IMR-90 (cell line): ENCODE measurements at regions of chr11 and their contacts with region 1.

Region 1: GRCh38 chr11:124970925-124971324 is 16.9 kb downstream of the CCDC15 start:
- DNase-seq: peak; percentile 35
- ATAC-seq: peak; percentile 69
- H3K4me3 ChIP-seq: no peak overlapping the region
- H3K27ac ChIP-seq: no peak overlapping the region
- H3K4me1 ChIP-seq: no peaks in the 10 kb centered on the region
- H3K27me3 ChIP-seq: no peaks in the 10 kb centered on the region
- CTCF ChIP-seq: no peak; the same call in 1 of the 2 replicates
- POLR2A ChIP-seq: no peak
- RAD21 ChIP-seq: peak; percentile 34; the same call in 1 of the 2 replicates

Region 2: GRCh38 chr11:124934862-124935547 is 35.9 kb before region 1 on chr11:
- CTCF ChIA-PET with region 1: no interaction called
- POLR2A ChIA-PET with region 1: no interaction called
- dilution Hi-C with region 1: no loop called
- in situ Hi-C with region 1: no loop called
- intact Hi-C with region 1: no loop called
- DNase-seq: peak; percentile 96
- ATAC-seq: peak; percentile 92
- H3K4me3 ChIP-seq: no peak overlapping the region
- H3K27ac ChIP-seq: peak overlapping the region; percentile 81
- H3K4me1 ChIP-seq: peaks cover 17% of the 10 kb centered on the region
- H3K27me3 ChIP-seq: no peaks in the 10 kb centered on the region
- CTCF ChIP-seq: peak; percentile 35
- POLR2A ChIP-seq: no peak
- RAD21 ChIP-seq: no peak

Region 3: DNA sequence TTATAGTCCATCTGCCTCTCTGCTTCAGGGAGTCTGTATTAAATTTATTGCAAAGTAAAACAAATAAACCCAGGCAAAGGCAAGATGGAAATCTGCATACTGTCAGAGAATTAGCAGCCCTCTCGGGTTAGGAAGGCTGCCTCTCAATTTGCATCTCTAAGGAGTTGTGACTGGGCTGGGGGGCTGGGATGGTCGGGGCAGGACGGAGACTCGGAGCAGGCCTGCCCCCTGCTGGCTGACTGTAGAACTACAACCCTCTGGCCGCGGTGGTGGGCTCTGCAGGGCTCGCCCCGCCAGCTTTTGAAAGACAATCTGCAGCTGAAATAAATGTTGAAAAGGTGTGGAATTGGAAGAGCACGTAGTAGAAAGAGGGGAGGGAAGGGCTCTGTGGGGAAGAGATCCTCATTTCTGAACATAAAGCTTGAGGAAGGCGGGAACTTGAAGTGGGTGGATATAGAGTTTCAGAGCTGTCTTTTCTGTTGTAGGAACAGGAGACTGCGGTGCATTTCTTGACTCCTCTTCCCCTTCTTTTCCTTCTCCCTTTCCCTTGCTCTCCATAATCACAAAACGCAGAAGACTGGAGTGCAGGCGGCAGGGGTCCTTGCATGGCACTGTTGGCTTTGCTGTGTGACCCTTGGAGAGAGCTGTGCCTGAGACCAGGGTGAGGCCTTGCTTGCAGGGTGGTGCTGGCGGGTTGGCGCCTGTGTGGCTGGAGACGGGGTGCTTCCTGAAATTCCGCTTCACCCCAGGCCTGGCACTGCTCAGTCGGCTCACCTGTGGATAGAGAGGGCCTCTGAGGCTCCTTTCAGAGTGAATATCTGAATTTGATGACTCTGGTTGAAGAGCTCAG is 171.0 kb after region 1 on chr11:
- CTCF ChIA-PET with region 1: no interaction called
- POLR2A ChIA-PET with region 1: no interaction called
- dilution Hi-C with region 1: no loop called
- in situ Hi-C with region 1: loop called (anchors 10 kb)
- intact Hi-C with region 1: loop called (anchors 2 kb)
- DNase-seq: peak; percentile 29
- ATAC-seq: peak; percentile 100
- H3K4me3 ChIP-seq: no peak overlapping the region
- H3K27ac ChIP-seq: no peak overlapping the region
- H3K4me1 ChIP-seq: no peaks in the 10 kb centered on the region; the same call in 1 of the 2 replicates
- H3K27me3 ChIP-seq: peaks cover 13% of the 10 kb centered on the region
- CTCF ChIP-seq: peak; percentile 83
- POLR2A ChIP-seq: 0 out of 2 replicates have a peak, but pooled peaks have one; percentile 29
- RAD21 ChIP-seq: peak; percentile 82

Region 4: GRCh38 chr11:125429166-125429707 is 458.3 kb after region 1 on chr11:
- CTCF ChIA-PET with region 1: no interaction called
- POLR2A ChIA-PET with region 1: no interaction called
- dilution Hi-C with region 1: no loop called
- in situ Hi-C with region 1: loop called (anchors 10 kb)
- intact Hi-C with region 1: no loop called
- DNase-seq: peak; percentile 55
- ATAC-seq: peak; percentile 78
- H3K4me3 ChIP-seq: no peak overlapping the region
- H3K27ac ChIP-seq: no peak overlapping the region
- H3K4me1 ChIP-seq: no peaks in the 10 kb centered on the region
- H3K27me3 ChIP-seq: peaks cover 10% of the 10 kb centered on the region
- CTCF ChIP-seq: peak; percentile 74
- POLR2A ChIP-seq: no peak
- RAD21 ChIP-seq: peak; percentile 75